ENCODE measurements at regions of chr2 and their contacts with region 1.

Region 1: DNA sequence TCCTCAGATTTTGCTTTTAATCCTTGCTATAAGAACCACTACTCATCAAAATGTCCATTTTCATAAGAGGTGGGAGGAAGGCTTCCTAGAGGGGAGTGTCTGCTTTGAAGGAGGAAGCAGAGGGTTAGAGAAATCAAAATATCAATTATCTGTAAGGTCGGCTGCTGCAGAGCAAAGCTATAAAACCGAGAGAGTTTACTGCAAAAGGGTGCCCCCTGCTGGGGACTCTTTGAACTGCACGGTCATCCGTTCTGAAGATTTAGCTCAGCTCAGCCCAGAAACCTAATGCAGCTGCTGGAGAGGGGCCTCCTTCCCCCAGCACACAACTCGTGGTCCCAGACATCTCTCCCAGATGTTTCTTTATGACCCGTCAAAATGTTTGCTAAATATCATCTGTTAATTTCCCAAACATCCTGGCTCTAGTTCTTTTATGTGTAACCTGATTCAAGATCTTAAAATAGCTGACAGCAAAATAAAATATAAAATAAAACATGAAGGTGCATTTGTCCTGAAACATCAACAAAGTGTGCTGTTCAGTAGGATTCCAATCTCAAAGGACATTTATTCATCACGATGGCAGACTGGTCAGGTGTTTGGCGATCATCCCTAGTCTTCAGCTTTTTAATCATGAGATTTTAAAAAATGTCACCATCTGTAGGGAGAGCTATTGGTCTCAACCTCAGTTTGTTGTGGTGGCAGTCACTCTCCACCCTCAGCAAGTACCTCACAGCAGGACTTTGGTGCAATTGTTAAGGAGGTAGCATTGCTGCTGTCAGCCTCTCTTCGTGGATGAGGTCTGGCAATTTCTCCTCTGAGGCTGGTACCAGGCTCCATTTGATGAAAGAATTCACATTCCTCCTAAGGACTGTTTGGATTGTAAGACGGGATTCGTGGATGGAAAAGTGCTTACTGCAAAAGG is 185.9 kb downstream of the MTX2 start:
- DNase-seq: peak; percentile 55
- CTCF ChIP-seq: peak; percentile 84

Region 2: DNA sequence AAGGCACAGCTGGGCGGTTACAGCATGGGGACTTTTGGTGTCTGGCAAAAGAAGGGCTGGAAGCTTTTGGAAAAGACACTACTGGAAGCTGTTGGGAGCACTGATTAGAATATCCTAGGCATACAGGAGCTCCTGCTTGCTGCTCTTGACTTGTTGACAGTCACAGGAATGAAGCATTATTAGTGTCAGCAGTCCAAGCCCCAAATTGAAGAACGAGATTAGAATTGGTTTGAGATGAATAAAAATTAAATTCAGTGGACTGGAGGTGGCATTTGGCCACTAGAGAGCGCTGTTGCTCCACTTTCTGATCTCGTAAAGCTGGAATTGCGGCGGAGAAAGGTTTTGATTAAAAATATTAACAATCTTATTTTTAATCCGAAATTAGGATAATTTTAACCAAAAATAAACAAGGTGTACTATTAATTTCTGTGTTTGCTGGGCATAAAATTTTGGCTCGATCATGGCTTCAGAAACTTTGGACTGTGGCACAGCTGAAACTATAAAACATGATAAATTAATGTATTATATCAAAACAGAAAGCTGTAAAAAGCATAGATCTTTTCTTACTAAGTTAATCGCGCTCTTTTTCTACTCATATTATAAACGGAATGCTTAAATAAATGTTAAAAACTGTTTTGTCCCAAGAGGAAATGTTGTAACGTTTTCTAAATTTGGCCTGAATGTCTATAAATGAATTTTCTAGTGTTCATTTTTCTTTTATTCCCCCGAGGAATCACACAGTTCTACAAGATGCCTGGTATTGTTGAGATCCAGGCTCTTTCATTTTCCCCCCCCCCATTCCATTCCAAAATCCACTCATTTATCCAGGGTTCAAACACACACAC is 328.0 kb before region 1 on chr2:
- CTCF ChIA-PET with region 1: interaction called, 34 read pairs
- POLR2A ChIA-PET with region 1: no interaction called
- DNase-seq: peak; percentile 50
- CTCF ChIP-seq: peak; percentile 79

Region 3: GRCh38 chr2:176435729-176436128 is 19.4 kb before region 1 on chr2:
- CTCF ChIA-PET with region 1: interaction called, 40 read pairs
- POLR2A ChIA-PET with region 1: no interaction called
- DNase-seq: no peak
- CTCF ChIP-seq: no peak

Region 4: DNA sequence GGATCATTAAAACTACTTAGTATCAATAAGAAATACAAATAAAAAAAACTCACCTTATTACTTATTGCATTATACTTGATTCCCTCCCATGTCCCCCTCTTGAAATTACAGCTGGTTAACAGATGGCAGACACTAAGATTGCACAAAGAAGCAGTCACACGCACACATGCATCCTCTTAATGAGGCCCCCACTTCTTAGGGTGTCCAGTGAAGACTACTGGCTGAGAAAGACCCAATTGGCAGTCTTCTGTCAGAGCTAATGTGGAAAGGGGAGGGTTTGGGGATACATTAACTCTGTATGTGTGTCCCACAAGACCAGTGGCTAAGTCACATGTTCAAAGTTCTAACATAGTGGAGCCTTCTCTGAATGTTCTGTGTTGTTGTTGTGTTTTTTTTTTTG is 24.8 kb after region 1 on chr2:
- CTCF ChIA-PET with region 1: interaction called, 25 read pairs
- POLR2A ChIA-PET with region 1: no interaction called
- DNase-seq: no peak
- CTCF ChIP-seq: no peak

Region 5: GRCh38 chr2:176518823-176519222 is 63.7 kb after region 1 on chr2:
- CTCF ChIA-PET with region 1: no interaction called
- POLR2A ChIA-PET with region 1: no interaction called
- DNase-seq: no peak
- CTCF ChIP-seq: no peak

Region 6: DNA sequence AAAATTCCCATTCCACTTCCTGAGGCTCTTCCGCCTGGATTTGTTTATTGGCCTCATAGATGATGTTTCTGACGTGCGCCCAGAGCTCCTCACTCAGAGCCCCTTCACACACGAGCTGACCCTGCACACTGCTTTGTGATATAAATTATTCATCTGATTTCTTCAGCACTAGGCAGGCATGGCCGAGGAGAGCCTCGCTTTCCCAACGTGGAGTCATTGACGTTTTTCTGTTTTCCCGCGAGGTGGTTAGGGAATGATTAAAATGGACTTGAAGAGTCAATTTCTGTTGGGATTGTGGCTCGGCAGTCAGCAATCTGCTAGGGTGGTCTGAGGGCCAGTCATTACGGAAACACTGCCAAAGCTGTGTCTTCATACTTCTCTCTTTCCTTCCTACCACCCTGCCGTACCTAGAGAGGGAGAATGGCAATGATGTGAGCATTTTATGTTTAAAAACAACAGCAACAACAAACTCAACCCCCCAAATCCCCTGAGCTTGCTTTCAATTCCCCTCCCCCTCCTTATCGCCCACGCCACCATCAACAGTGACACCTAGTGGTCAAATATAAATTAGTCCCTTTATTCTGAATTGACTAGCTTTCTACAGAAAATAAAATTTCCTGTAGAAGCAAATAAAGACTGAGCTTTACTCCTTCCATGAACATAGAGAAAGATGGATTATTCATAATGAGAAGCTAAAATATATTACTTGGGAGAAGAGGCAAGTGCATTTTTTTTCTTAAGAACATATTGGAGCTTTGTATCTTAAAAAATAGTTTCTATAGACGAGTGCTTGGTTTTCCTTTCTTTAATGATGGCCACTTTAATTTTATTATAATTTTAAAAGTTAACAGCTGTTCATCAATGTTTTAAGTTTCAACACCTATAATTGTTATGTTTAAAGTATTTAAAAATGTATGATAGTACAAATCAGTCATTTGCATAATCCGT is 99.2 kb after region 1 on chr2:
- CTCF ChIA-PET with region 1: interaction called, 18 read pairs
- POLR2A ChIA-PET with region 1: no interaction called
- DNase-seq: peak; percentile 68
- CTCF ChIP-seq: peak; percentile 56

Region 7: GRCh38 chr2:176789751-176790150 is 334.6 kb after region 1 on chr2:
- CTCF ChIA-PET with region 1: no interaction called
- POLR2A ChIA-PET with region 1: no interaction called
- DNase-seq: no peak
- CTCF ChIP-seq: no peak